HCT116 (cell line): ENCODE measurements at regions of chr16 and their contacts with region 1.

Region 1: DNA sequence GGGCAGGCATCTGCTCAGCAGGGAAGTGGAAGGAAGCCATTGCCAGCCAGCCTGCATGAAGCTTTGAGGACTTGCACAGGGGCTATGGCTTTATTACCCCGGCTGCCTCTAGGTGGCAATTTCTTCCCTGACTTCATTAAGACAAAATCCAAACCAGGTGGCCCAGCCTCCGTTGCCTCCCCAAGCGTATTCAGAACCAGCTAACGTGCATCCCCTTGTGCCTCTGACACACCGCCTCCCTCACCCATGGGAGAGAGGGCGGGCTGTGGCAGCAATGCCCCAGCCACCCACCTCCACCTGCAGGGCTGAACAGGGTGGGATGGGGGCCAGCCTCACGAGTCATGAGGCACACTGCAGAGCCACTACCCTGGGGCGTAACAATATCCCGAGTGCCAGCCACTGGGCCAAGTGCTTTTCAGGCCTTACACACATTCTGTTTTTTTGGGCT is 6.8 kb downstream of the KIFC3 start:
- DNase-seq: peak; percentile 53
- ATAC-seq: peak; percentile 79
- H3K4me3 ChIP-seq: no peak overlapping the region
- H3K27ac ChIP-seq: peak overlapping the region; percentile 27; the same call in 1 of the 2 replicates
- H3K4me1 ChIP-seq: peaks cover 47 to 50% of the 10 kb centered on the region in 2 experiments
- H3K27me3 ChIP-seq: no peaks in the 10 kb centered on the region
- CTCF ChIP-seq: peak; percentile 51 to 56 (median 56); a peak in 5 of 6 replicates
- POLR2A ChIP-seq: no peak
- RAD21 ChIP-seq: peak; percentile 70

Region 2: GRCh38 chr16:57591086-57591869 is 204.2 kb before region 1 on chr16:
- CTCF ChIA-PET with region 1: no interaction called
- POLR2A ChIA-PET with region 1: no interaction called
- RAD21 ChIA-PET with region 1: no interaction called
- intact Hi-C with region 1: no loop called
- DNase-seq: peak; percentile 76
- ATAC-seq: peak; percentile 92
- H3K4me3 ChIP-seq: peak overlapping the region; percentile 30 to 54
- H3K27ac ChIP-seq: peak overlapping the region; percentile 42
- H3K4me1 ChIP-seq: peaks cover 11 to 21% of the 10 kb centered on the region in 2 experiments
- H3K27me3 ChIP-seq: no peaks in the 10 kb centered on the region
- CTCF ChIP-seq: peak; percentile 91 to 99 (median 93)
- POLR2A ChIP-seq: no peak
- RAD21 ChIP-seq: peak; percentile 93

Region 3: GRCh38 chr16:57609541-57610401 is 185.7 kb before region 1 on chr16:
- CTCF ChIA-PET with region 1: no interaction called
- POLR2A ChIA-PET with region 1: no interaction called
- RAD21 ChIA-PET with region 1: no interaction called
- intact Hi-C with region 1: no loop called
- DNase-seq: no peak
- ATAC-seq: no peak
- H3K4me3 ChIP-seq: no peak overlapping the region
- H3K27ac ChIP-seq: no peak overlapping the region
- H3K4me1 ChIP-seq: no peaks in the 10 kb centered on the region
- H3K27me3 ChIP-seq: no peaks in the 10 kb centered on the region
- CTCF ChIP-seq: no peak
- POLR2A ChIP-seq: no peak
- RAD21 ChIP-seq: 0 out of 2 replicates have a peak, but pooled peaks have one; percentile 12

Region 4: GRCh38 chr16:57810197-57811031 is 15.0 kb after region 1 on chr16:
- CTCF ChIA-PET with region 1: interaction called, 15 read pairs
- POLR2A ChIA-PET with region 1: interaction called, 3 read pairs
- RAD21 ChIA-PET with region 1: no interaction called
- intact Hi-C with region 1: no loop called
- DNase-seq: peak; percentile 82
- ATAC-seq: peak; percentile 88
- H3K4me3 ChIP-seq: peak overlapping the region in 1 of 2 experiments; percentile 24; a peak in 2 of 4 replicates
- H3K27ac ChIP-seq: peak overlapping the region; percentile 71
- H3K4me1 ChIP-seq: peaks cover 54 to 66% of the 10 kb centered on the region in 2 experiments
- H3K27me3 ChIP-seq: no peaks in the 10 kb centered on the region
- CTCF ChIP-seq: no peak
- POLR2A ChIP-seq: peak; percentile 46
- RAD21 ChIP-seq: no peak

Region 5: DNA sequence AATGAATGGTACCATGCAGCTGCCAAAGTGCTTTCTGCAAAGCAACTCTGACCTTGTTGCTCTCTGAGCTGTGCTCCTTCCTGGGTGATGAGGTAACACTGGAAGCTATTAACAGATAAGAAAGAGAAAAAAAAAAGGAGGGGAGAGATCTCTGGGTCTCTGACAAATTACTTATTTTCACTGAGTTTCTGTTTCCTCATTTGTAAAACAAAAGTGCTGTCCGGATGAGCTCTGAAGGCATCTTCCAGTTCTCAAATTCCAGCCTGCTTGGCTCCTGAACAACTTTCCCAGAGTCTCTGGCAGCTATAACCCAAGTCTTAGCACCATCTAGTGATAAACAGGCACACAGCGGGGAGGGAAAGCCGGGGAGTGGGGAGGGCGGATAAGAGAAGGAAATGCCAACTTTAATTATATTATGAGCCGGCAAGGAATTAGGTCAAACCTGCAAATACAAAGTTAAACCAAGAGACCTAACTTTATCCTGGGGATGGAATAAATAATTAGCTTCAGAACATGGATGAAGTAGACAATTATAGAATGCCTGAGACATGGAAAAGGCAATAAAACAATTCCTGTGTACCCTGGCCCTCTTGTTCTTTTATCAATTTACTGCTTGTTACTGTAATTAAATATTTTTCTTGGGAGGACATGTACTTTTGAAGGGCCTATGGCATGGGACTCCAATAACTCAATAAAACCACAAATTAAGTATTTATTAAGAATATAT is 68.1 kb after region 1 on chr16:
- CTCF ChIA-PET with region 1: interaction called, 7 read pairs
- POLR2A ChIA-PET with region 1: no interaction called
- RAD21 ChIA-PET with region 1: interaction called, 7 read pairs
- intact Hi-C with region 1: loop called (anchors 2 kb)
- DNase-seq: peak; percentile 45
- ATAC-seq: peak; percentile 84
- H3K4me3 ChIP-seq: no peak overlapping the region
- H3K27ac ChIP-seq: no peak overlapping the region
- H3K4me1 ChIP-seq: peaks cover 13 to 36% of the 10 kb centered on the region in 2 experiments; a peak in 3 of 4 replicates
- H3K27me3 ChIP-seq: no peaks in the 10 kb centered on the region
- CTCF ChIP-seq: peak; percentile 58 to 97 (median 70)
- POLR2A ChIP-seq: no peak
- RAD21 ChIP-seq: peak; percentile 96